ENCODE measurements at regions of chr5 and their contacts with region 1.

Region 1: GRCh38 chr5:59174248-59174844 is 591.5 kb downstream of the RAB3C start:
- DNase-seq: peak; percentile 37
- H3K4me3 Mint-ChIP-seq: no peak overlapping the region
- H3K27ac Mint-ChIP-seq: no peak overlapping the region
- H3K4me1 Mint-ChIP-seq: peaks cover 41% of the 10 kb centered on the region
- H3K27me3 Mint-ChIP-seq: no peaks in the 10 kb centered on the region

Region 2: GRCh38 chr5:59020611-59021285 is 153.6 kb before region 1 on chr5:
- CTCF ChIA-PET with region 1: interaction called, 10 read pairs
- POLR2A ChIA-PET with region 1: no interaction called
- DNase-seq: no peak
- H3K4me3 Mint-ChIP-seq: no peak overlapping the region
- H3K27ac Mint-ChIP-seq: peak overlapping the region; percentile 27
- H3K4me1 Mint-ChIP-seq: peaks cover 59% of the 10 kb centered on the region
- H3K27me3 Mint-ChIP-seq: no peaks in the 10 kb centered on the region

Region 3: GRCh38 chr5:59039296-59040023 is 134.9 kb before region 1 on chr5:
- CTCF ChIA-PET with region 1: interaction called, 109 read pairs
- POLR2A ChIA-PET with region 1: interaction called, 15 read pairs
- DNase-seq: peak; percentile 95
- H3K4me3 Mint-ChIP-seq: peak overlapping the region; percentile 84
- H3K27ac Mint-ChIP-seq: peak overlapping the region; percentile 97
- H3K4me1 Mint-ChIP-seq: peaks cover 46% of the 10 kb centered on the region
- H3K27me3 Mint-ChIP-seq: no peaks in the 10 kb centered on the region

Region 4: DNA sequence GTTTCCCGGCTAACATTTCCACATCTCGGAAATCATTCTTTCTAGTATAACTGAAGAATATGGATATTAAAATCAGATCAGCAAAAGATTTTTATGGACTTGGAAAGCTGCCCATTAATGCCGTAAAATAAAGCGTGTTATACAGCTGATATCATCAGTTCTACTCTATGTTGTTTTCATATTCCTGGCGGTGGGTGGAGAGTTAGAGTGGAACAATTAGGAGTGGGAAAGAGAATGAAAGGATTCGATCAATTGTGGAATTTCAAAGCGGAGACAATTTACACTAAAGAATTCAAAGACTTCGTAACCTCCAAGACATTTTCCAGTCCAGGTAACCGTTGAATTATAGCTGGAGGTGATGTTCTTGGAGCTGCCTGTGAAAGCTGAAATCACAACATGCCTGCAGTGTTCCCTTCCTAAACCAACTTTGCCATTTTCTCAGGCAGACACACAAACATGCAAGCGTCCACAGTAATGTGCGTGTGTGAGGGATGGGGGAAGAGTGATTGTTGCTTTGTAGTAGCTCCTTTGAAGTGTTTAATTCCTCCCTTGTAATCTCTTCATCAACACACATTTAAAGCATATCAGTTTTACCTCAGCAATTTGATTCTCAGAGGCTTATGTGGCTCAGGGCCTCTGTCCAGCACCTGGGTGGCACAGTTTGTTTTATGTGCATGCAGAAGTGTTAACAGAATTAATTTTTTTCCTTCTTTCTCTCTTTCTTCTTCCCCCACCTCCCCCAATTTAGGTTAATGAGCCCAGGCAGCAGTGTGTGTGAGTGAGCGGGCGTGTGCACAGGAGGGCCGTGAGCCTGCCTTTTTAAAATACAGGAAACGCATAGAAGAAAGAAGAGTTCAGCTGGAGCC is 47.4 kb before region 1 on chr5:
- CTCF ChIA-PET with region 1: interaction called, 28 read pairs
- POLR2A ChIA-PET with region 1: interaction called, 14 read pairs
- DNase-seq: no peak
- H3K4me3 Mint-ChIP-seq: no peak overlapping the region
- H3K27ac Mint-ChIP-seq: no peak overlapping the region
- H3K4me1 Mint-ChIP-seq: peaks cover 19% of the 10 kb centered on the region
- H3K27me3 Mint-ChIP-seq: no peaks in the 10 kb centered on the region

Region 5: GRCh38 chr5:59133682-59134261 is 40.6 kb before region 1 on chr5:
- CTCF ChIA-PET with region 1: interaction called, 28 read pairs
- POLR2A ChIA-PET with region 1: interaction called, 14 read pairs
- DNase-seq: no peak
- H3K4me3 Mint-ChIP-seq: no peak overlapping the region
- H3K27ac Mint-ChIP-seq: no peak overlapping the region
- H3K4me1 Mint-ChIP-seq: peaks cover 49% of the 10 kb centered on the region
- H3K27me3 Mint-ChIP-seq: no peaks in the 10 kb centered on the region

Region 6: DNA sequence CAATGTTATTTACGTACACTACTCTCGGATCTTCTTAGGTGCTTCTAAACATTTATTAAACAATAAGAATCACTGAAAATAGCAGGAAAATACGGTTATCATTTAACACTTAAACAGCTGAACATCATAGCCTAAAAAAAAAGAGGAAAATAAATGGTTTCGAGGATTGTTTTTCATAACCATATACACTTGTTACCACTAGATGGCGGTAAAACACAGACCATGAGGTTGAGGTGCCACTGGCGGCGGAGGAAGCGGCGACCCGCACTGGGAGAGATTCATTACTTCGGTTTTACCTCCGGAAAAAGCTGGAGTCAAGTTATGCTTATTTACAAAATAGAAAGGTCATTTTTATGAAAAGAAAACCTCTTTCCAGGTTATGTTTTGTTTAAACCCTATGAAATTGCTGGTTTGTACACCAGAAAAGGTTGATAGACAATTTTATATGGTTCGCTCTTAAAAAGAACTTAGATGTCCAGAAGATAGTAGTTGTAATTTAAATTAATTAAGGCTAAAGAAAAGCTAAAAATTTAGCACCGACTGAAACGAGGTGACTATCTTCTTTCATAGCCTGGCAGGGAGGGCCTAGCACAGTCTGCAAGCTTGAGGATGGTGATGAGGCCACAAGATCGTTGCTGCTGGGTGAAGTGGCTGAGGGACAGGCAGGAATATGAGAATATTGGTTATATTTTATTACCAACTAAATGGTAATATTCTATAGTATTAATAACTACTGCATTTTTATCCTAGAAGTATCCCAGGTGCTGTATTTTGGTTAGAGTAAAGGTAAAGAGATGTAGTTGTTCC is 14.3 kb after region 1 on chr5:
- CTCF ChIA-PET with region 1: interaction called, 21 read pairs
- POLR2A ChIA-PET with region 1: no interaction called
- DNase-seq: peak; percentile 66
- H3K4me3 Mint-ChIP-seq: peak overlapping the region; percentile 9
- H3K27ac Mint-ChIP-seq: no peak overlapping the region
- H3K4me1 Mint-ChIP-seq: peaks cover 8% of the 10 kb centered on the region
- H3K27me3 Mint-ChIP-seq: peaks cover 45% of the 10 kb centered on the region

Region 7: GRCh38 chr5:59246145-59246869 is 72.0 kb after region 1 on chr5:
- CTCF ChIA-PET with region 1: no interaction called
- POLR2A ChIA-PET with region 1: no interaction called
- DNase-seq: no peak
- H3K4me3 Mint-ChIP-seq: no peak overlapping the region
- H3K27ac Mint-ChIP-seq: no peak overlapping the region
- H3K4me1 Mint-ChIP-seq: no peaks in the 10 kb centered on the region
- H3K27me3 Mint-ChIP-seq: peaks cover 6% of the 10 kb centered on the region

Region 8: DNA sequence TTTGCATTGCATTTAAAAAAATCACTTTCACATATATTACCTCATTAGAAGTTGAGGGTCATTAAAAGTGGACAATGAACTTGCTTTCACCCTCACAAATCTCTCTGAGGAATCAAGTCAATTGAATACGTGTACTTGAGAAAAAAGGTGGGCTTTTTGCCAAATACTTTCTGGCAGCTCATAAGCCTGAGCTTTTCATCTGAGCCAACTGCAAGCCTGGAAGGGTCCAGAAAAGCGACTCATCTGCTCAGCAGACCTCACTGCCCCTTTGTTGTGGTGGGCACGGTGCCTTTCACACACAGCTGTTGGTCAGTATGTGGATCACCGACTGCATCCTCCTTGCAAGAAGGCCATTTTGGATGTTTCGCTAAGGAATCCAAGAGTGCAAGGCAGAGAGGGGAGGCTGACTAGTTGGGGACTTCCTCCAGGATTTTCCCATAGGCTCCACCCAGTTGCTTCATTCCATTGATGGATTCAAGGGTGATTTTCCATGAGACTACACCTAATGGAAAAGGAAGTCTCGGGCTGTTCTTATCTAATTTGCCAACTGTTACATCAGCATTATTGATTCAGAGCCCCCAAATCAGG is 154.5 kb after region 1 on chr5:
- CTCF ChIA-PET with region 1: no interaction called
- POLR2A ChIA-PET with region 1: no interaction called
- DNase-seq: no peak
- H3K4me3 Mint-ChIP-seq: no peak overlapping the region
- H3K27ac Mint-ChIP-seq: no peak overlapping the region
- H3K4me1 Mint-ChIP-seq: no peaks in the 10 kb centered on the region
- H3K27me3 Mint-ChIP-seq: peaks cover 13% of the 10 kb centered on the region